Right ventricle myocardium superior (tissue), 1 donor: ENCODE measurements at regions of chr11 and their contacts with region 1.

Region 1: GRCh38 chr11:48110509-48110766 is 106.2 kb upstream of the OR4B1 start:
- DNase-seq: no peak
- ATAC-seq: no peak

Region 2: DNA sequence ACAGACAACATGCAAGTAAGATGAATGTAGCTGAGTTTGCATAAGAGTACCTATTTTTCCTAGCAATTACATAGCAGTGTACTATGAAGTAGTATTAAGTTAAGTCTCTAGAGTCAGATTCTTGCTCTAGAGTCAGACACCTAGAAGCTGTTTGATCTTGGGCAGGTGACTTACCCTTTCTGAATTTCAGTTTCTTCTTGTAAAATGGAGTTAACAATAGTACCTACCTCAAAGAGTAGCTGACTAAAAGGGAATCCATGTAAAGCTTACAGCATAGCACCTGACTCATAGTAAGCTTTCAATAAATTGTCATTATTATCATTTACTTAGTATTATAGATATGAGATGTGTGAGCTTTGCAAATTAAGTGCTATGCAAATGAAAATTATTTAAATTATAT is 177.9 kb before region 1 on chr11:
- intact Hi-C with region 1: loop called (anchors 1 kb)
- DNase-seq: no peak
- ATAC-seq: no peak

Region 3: DNA sequence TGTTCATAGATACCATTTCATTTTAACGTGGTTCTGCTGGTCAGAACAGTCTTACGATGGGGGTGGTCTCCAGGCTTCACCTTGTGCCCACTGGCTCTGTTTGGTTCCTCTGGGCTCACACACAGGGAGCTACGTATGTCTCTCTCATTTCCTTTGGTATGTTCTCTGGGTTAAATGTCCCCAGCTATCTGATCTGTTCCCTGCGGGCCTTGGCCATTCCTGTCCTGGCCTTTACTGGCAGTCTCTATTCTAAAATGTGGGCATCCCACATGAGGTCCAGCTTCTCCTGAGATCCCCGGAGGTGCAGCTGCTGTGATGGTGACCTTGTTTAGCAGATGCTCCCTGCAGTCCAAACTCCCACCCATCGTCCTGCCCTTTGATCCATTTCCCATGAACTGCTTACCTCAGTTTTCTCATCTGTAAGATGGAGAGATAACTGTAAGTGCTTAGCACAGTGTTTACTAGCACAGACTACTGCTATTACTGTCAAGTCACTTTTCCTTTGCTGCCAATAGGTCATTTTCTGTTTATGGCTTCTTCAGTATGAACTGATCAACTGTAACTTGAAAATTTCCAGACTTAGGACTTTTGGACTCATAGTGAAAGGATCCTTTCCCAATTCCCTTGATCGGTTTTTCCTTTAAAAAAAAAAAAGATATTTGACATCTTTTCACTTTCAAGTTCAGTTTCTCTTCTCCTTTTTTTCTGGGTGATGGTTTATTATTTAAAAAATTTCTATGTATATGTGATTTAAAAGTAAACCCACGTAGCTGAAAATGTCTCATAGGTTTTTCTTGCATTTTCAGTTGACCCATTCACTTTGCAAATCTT is 37.2 kb before region 1 on chr11:
- intact Hi-C with region 1: no loop called
- DNase-seq: no peak
- ATAC-seq: no peak